ENCODE measurements at regions of chr2 and their contacts with region 1.

Region 1: GRCh38 chr2:11863513-11864328 is 117.3 kb downstream of the LPIN1 start:
- DNase-seq: peak; percentile 80
- ATAC-seq: peak; percentile 49
- H3K4me3 Mint-ChIP-seq: peak overlapping the region; percentile 11
- H3K27ac Mint-ChIP-seq: no peak overlapping the region
- H3K4me1 Mint-ChIP-seq: peaks cover 29% of the 10 kb centered on the region
- H3K27me3 Mint-ChIP-seq: peaks cover 13% of the 10 kb centered on the region

Region 2: DNA sequence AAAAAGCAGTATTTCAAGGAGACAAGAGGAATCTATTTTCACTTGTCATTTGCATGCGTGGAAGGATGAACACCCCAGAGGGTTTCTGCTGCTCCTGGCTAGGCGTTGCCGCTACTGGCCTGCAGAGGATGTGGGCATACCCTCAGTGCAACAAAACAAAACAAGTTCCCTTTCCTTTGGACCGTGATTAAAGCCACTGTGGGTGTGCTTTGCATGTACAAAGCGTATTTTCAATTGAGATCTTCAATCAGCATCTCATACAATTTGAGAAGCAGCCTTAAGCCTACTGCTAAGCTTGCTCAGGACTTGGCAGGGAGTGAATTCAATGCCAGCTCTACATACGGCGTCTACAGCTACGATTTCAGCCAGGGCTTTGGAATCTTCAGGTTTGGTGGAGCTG is 181.1 kb after region 1 on chr2:
- CTCF ChIA-PET with region 1: interaction called, 3 read pairs
- POLR2A ChIA-PET with region 1: no interaction called
- intact Hi-C with region 1: loop called in 1 of 2 experiments (anchors 10 kb)
- DNase-seq: peak; percentile 11
- ATAC-seq: no peak
- H3K4me3 Mint-ChIP-seq: no peak overlapping the region
- H3K27ac Mint-ChIP-seq: no peak overlapping the region
- H3K4me1 Mint-ChIP-seq: peaks cover 53% of the 10 kb centered on the region
- H3K27me3 Mint-ChIP-seq: peaks cover 2% of the 10 kb centered on the region